ENCODE measurements at regions of chr13 and their contacts with region 1.

Region 1: DNA sequence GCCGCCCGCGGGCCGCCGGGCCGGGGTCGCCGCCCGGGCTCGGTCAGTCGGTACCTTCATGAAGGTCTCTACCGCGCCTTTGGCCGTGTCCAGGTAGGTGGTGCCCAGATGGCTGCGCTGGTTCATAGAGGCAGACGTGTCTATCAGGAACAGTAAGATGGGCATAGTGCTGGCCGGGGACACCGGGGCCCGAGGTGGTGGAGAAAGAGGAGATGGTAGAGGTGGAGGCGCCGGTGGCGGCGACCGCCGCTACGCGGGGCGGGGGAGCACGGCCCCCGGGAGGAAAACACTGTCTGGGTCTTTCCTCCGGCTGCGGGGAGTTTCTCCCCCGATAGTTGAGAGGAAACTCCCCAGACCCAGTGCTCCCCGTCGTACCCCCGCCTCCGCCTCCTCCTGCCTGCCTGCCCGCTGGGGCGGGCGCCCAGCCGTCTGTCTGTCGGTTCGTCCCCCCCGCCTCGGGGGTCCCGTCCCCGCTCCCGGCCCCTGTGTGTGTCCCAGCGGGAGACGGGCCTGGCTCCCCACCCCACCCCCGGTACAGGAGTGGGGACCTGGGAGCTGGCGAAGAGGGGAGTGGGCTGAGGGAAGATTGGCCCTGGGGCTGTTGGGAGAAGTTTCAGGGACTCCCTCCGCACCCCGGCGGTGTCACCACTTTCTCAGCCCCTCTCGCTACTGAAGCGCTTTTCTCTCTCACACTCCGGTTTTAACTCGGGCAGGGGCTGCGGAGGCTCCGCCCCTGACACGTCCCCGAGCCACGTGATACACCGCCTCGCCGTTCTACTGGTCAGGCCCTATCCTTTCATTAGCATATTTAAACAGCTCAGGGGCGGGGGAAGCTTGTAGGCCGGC is at the start of gene INTS6:
- DNase-seq: peak; percentile 85 to 98
- ATAC-seq: peak; percentile 73 to 91
- H3K4me3 ChIP-seq: peak within 1 kb of the TSS; percentile 100
- H3K27ac ChIP-seq: peak within 1 kb of the TSS; percentile 100
- H3K4me1 ChIP-seq: peaks cover 31% of the 10 kb centered on the region
- CTCF ChIP-seq: no peak
- EP300 ChIP-seq: no peak
- POLR2A ChIP-seq: peak; percentile 99
- RAD21 ChIP-seq: no peak; a peak in 1 of 5 replicates
- polyA plus RNA-seq, gene INTS6: 37.1 and 42.6 TPM in 2 replicates

Region 2: GRCh38 chr13:51523082-51523518 is 70.5 kb after region 1 on chr13:
- CTCF ChIA-PET with region 1: no interaction called
- POLR2A ChIA-PET with region 1: interaction called, 34 read pairs
- DNase-seq: peak in 1 of 2 experiments; percentile 76
- ATAC-seq: peak; percentile 23 to 66; a peak in 3 of 6 replicates
- H3K4me3 ChIP-seq: no peak overlapping the region
- H3K27ac ChIP-seq: peak overlapping the region; percentile 90 to 96
- H3K4me1 ChIP-seq: peaks cover 68% of the 10 kb centered on the region
- CTCF ChIP-seq: no peak
- EP300 ChIP-seq: peak in 1 of 2 experiments; percentile 35; a peak in 1 of 5 replicates
- POLR2A ChIP-seq: no peak
- RAD21 ChIP-seq: peak in 1 of 2 experiments; percentile 27; a peak in 2 of 5 replicates

Region 3: GRCh38 chr13:51583875-51584730 is 131.5 kb after region 1 on chr13 and contains the start of gene WDFY2:
- CTCF ChIA-PET with region 1: interaction called, 4 read pairs
- POLR2A ChIA-PET with region 1: interaction called, 43 read pairs
- DNase-seq: peak; percentile 69 to 99
- ATAC-seq: peak; percentile 90 to 91
- H3K4me3 ChIP-seq: peak within 1 kb of the TSS; percentile 89
- H3K27ac ChIP-seq: peak within 1 kb of the TSS; percentile 93 to 95
- H3K4me1 ChIP-seq: peaks cover 35% of the 10 kb centered on the region; the same call in 2 of the 3 replicates
- CTCF ChIP-seq: no peak
- EP300 ChIP-seq: no peak
- POLR2A ChIP-seq: peak; percentile 81
- RAD21 ChIP-seq: peak in 1 of 2 experiments; percentile 10; a peak in 1 of 5 replicates
- polyA plus RNA-seq, gene WDFY2: 8.5 TPM in 2 replicates

Region 4: DNA sequence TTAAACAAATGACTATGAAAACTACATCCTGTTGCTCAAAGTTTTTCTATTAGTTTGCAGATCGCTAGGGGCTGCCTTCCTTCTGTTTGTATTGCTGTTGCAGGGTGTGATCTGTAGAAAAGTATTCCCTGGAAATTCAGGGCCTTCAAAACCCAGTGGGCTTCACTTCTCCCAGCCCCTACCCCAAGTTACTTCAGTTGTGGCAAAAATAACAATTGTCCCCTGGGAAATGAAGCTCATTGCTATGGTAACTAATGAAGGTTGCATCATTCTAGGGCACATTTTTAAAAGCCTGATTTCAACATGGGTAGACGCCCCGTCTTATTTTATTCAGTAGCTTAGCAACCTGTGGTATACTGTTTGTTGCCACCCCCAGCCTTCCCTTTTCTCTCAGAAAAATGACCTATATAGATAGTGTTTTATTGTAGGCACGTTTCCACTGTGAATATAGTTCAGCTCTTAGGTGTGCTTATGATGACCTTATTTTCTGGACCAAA is 192.6 kb after region 1 on chr13:
- CTCF ChIA-PET with region 1: interaction called, 3 read pairs
- POLR2A ChIA-PET with region 1: interaction called, 18 read pairs
- DNase-seq: peak in 1 of 2 experiments; percentile 43
- ATAC-seq: peak; percentile 16 to 27; a peak in 3 of 6 replicates
- H3K4me3 ChIP-seq: no peak overlapping the region
- H3K27ac ChIP-seq: peak overlapping the region; percentile 81 to 93
- H3K4me1 ChIP-seq: peaks cover 48% of the 10 kb centered on the region
- CTCF ChIP-seq: no peak
- EP300 ChIP-seq: no peak
- POLR2A ChIP-seq: no peak
- RAD21 ChIP-seq: no peak

Region 5: GRCh38 chr13:51731759-51732158 is 279.2 kb after region 1 on chr13:
- CTCF ChIA-PET with region 1: no interaction called
- POLR2A ChIA-PET with region 1: interaction called, 17 read pairs
- DNase-seq: peak; percentile 4 to 16
- ATAC-seq: peak in 1 of 2 experiments; percentile 21; a peak in 2 of 6 replicates
- H3K4me3 ChIP-seq: no peak overlapping the region
- H3K27ac ChIP-seq: peak overlapping the region in 1 of 2 experiments; percentile 83; a peak in 2 of 6 replicates
- H3K4me1 ChIP-seq: peaks cover 58% of the 10 kb centered on the region
- CTCF ChIP-seq: peak; percentile 38
- EP300 ChIP-seq: no peak
- POLR2A ChIP-seq: no peak
- RAD21 ChIP-seq: peak; percentile 44 to 56

Region 6: GRCh38 chr13:51797664-51798488 is 345.3 kb after region 1 on chr13:
- CTCF ChIA-PET with region 1: interaction called, 10 read pairs
- POLR2A ChIA-PET with region 1: interaction called, 13 read pairs
- DNase-seq: peak; percentile 44 to 67
- ATAC-seq: peak; percentile 63 to 81
- H3K4me3 ChIP-seq: no peak overlapping the region
- H3K27ac ChIP-seq: peak overlapping the region; percentile 51; a peak in 3 of 6 replicates
- H3K4me1 ChIP-seq: peaks cover 31% of the 10 kb centered on the region
- CTCF ChIP-seq: peak; percentile 63
- EP300 ChIP-seq: no peak
- POLR2A ChIP-seq: no peak
- RAD21 ChIP-seq: peak; percentile 82 to 83

Measured in A549 (cell line).